Prostate gland (tissue), 2 donors: ENCODE measurements at regions of chr7 and their contacts with region 1.

Region 1: GRCh38 chr7:151315038-151315655 is 26.5 kb upstream of the NUB1 start:
- DNase-seq: peak; percentile 75
- H3K4me3 ChIP-seq: no peak overlapping the region
- H3K27ac ChIP-seq: no peak overlapping the region
- H3K4me1 ChIP-seq: no peaks in the 10 kb centered on the region
- H3K27me3 ChIP-seq: no peaks in the 10 kb centered on the region
- CTCF ChIP-seq: peak; percentile 60 to 80 (median 78)
- POLR2A ChIP-seq: no peak

Region 2: GRCh38 chr7:151291206-151291605 is 23.9 kb before region 1 on chr7:
- intact Hi-C with region 1: no loop called
- DNase-seq: no peak
- H3K4me3 ChIP-seq: no peak overlapping the region
- H3K27ac ChIP-seq: no peak overlapping the region
- H3K4me1 ChIP-seq: no peaks in the 10 kb centered on the region
- H3K27me3 ChIP-seq: no peaks in the 10 kb centered on the region
- CTCF ChIP-seq: no peak
- POLR2A ChIP-seq: no peak

Region 3: GRCh38 chr7:151351027-151351426 is 35.9 kb after region 1 on chr7:
- intact Hi-C with region 1: loop called (anchors 2 kb)
- DNase-seq: no peak
- H3K4me3 ChIP-seq: no peak overlapping the region
- H3K27ac ChIP-seq: no peak overlapping the region
- H3K4me1 ChIP-seq: peaks cover 3% of the 10 kb centered on the region
- H3K27me3 ChIP-seq: no peaks in the 10 kb centered on the region
- CTCF ChIP-seq: no peak
- POLR2A ChIP-seq: no peak

Region 4: DNA sequence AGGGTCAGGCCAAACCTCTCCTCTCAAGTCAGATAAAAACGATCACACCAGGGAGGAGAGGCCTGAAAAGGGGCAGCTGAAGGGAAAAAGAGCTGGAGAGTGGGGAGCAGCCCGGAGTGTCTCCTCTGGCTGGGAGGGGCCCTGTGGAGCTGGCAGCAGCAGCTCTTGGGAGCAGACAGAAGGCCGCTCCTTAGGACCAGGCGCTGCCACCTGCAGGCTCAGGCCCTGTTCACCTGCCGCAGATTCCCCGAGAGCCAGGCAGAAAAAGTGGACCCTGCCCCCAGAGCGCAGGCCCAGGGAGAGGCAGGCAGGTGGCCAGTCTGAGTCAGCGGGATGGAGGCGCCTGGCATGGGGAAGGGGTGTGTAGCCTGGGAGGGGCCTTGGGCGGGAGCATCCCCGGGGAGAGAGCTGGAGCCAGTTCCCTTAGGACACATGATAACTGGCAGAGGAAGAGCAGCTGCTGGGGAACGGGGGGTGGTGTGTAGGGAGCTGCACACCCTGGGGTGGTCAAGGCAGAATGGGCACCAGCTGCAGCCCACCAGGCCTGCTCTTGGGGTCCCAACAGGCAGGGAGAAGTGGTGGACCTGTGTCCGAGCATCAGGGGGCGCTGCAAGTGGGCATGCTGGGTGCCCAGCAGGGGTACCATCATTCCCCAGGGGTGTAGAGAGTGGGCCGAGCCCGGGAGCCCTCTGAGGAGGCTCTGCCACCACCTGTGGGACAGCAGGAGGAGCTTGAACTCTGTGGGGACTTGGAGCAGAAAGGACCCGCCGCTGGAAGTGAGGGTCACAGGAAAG is 381.8 kb after region 1 on chr7:
- intact Hi-C with region 1: loop called (anchors 5 kb)
- DNase-seq: peak; percentile 35
- H3K4me3 ChIP-seq: no peak overlapping the region
- H3K27ac ChIP-seq: peak overlapping the region; percentile 75 to 77
- H3K4me1 ChIP-seq: peaks cover 12% of the 10 kb centered on the region
- H3K27me3 ChIP-seq: no peaks in the 10 kb centered on the region
- CTCF ChIP-seq: peak in 2 of 4 experiments; percentile 10 to 27
- POLR2A ChIP-seq: no peak

Region 5: GRCh38 chr7:152574892-152575640 is 1259.9 kb after region 1 on chr7:
- intact Hi-C with region 1: no loop called
- DNase-seq: no peak
- H3K4me3 ChIP-seq: no peak overlapping the region
- H3K27ac ChIP-seq: no peak overlapping the region
- H3K4me1 ChIP-seq: no peaks in the 10 kb centered on the region
- H3K27me3 ChIP-seq: no peaks in the 10 kb centered on the region
- CTCF ChIP-seq: no peak
- POLR2A ChIP-seq: no peak